GM12878 (cell line): ENCODE measurements at regions of chrX and their contacts with region 1.

Region 1: DNA sequence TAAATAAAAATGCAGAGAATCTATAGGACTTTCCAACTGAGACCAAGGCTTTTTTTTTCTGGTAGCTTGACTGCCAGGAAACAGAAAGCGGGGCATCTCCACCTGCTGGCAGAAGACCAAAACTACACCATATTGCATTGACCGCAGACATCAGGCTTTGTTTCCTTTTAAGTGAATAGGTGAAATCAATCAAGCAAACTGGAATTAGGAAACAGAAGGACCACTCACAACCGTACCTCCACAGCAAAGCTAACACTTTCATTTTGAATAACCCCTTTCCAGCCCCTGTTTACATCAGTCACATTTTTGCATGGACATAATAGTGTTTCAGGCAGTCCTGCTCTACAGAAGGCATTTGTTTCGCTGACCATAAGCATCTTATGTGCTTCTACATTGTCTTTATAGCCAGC is 218.2 kb downstream of the IDS start:
- DNase-seq: peak; percentile 40
- ATAC-seq: peak; percentile 76
- H3K4me3 ChIP-seq: no peak overlapping the region
- H3K27ac ChIP-seq: no peak overlapping the region
- H3K4me1 ChIP-seq: no peaks in the 10 kb centered on the region
- H3K27me3 ChIP-seq: no peaks in the 10 kb centered on the region
- CTCF ChIP-seq: peak; percentile 73 to 85 (median 73)
- EP300 ChIP-seq: no peak
- POLR2A ChIP-seq: no peak
- RAD21 ChIP-seq: peak; percentile 83

Region 2: DNA sequence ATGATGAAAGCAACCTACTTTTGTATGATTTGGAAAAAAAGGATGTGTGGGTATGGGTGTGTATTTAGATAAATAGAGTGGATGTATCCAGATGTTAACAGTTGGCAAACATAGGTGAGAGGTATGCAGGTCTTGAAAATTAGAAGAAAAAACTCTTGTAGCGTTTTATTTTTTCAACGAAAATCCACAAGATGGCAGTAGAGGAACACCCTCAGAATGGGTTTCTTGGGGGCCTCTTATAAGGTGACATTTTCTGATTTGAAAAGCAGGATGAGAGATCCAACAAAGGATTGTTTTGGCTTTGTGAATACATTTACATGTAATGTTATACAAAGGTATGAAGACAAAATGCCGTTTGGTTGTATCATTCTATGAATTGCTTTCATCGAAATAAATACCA is 1237.5 kb before region 1 on chrX:
- CTCF ChIA-PET with region 1: interaction called, 3 read pairs
- POLR2A ChIA-PET with region 1: no interaction called
- RAD21 ChIA-PET with region 1: interaction called, 8 read pairs
- SMC1A ChIA-PET with region 1: interaction called, 8 read pairs
- in situ Hi-C with region 1: loop called (anchors 5 kb)
- intact Hi-C with region 1: loop called (anchors 1 kb)
- DNase-seq: no peak
- ATAC-seq: peak; percentile 69
- H3K4me3 ChIP-seq: no peak overlapping the region
- H3K27ac ChIP-seq: no peak overlapping the region
- H3K4me1 ChIP-seq: no peaks in the 10 kb centered on the region
- H3K27me3 ChIP-seq: no peaks in the 10 kb centered on the region
- CTCF ChIP-seq: peak; percentile 46 to 62 (median 49); a peak in 5 of 6 replicates
- EP300 ChIP-seq: no peak
- POLR2A ChIP-seq: no peak
- RAD21 ChIP-seq: peak; percentile 90

Region 3: GRCh38 chrX:148530464-148531077 is 756.4 kb before region 1 on chrX:
- CTCF ChIA-PET with region 1: interaction called, 6 read pairs
- POLR2A ChIA-PET with region 1: no interaction called
- RAD21 ChIA-PET with region 1: interaction called, 3 read pairs
- SMC1A ChIA-PET with region 1: interaction called, 5 read pairs
- in situ Hi-C with region 1: no loop called
- intact Hi-C with region 1: loop called (anchors 10 kb)
- DNase-seq: no peak
- ATAC-seq: no peak; the same call in 2 of the 3 replicates
- H3K4me3 ChIP-seq: no peak overlapping the region
- H3K27ac ChIP-seq: no peak overlapping the region
- H3K4me1 ChIP-seq: no peaks in the 10 kb centered on the region
- H3K27me3 ChIP-seq: no peaks in the 10 kb centered on the region
- CTCF ChIP-seq: peak; percentile 47 to 74 (median 58); a peak in 5 of 6 replicates
- EP300 ChIP-seq: no peak
- POLR2A ChIP-seq: no peak
- RAD21 ChIP-seq: peak; percentile 43

Region 4: DNA sequence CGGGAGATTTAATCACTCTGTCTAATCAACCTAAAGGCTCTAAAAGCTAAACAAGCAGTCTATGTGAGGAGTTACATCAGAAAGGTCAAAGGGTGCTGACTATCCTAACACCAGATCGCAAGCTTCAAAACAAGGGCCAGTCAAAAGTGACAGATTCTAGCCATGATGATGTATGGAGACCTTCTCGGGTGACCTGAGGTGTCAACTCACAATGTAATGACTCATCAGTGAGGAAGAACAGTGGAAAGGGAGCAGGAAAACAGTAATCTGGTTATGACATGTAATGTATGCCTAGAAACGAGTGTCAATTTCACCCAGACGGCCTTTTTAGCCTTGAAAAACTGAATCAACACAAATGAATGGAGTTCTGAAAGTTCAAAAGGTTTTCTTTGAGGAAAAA is 157.2 kb before region 1 on chrX:
- CTCF ChIA-PET with region 1: interaction called, 3 read pairs
- POLR2A ChIA-PET with region 1: no interaction called
- RAD21 ChIA-PET with region 1: interaction called, 3 read pairs
- SMC1A ChIA-PET with region 1: no interaction called
- in situ Hi-C with region 1: no loop called
- intact Hi-C with region 1: loop called (anchors 10 kb)
- DNase-seq: no peak
- ATAC-seq: peak; percentile 66
- H3K4me3 ChIP-seq: no peak overlapping the region
- H3K27ac ChIP-seq: no peak overlapping the region
- H3K4me1 ChIP-seq: no peaks in the 10 kb centered on the region
- H3K27me3 ChIP-seq: no peaks in the 10 kb centered on the region
- CTCF ChIP-seq: no peak
- EP300 ChIP-seq: no peak
- POLR2A ChIP-seq: no peak
- RAD21 ChIP-seq: no peak

Region 5: DNA sequence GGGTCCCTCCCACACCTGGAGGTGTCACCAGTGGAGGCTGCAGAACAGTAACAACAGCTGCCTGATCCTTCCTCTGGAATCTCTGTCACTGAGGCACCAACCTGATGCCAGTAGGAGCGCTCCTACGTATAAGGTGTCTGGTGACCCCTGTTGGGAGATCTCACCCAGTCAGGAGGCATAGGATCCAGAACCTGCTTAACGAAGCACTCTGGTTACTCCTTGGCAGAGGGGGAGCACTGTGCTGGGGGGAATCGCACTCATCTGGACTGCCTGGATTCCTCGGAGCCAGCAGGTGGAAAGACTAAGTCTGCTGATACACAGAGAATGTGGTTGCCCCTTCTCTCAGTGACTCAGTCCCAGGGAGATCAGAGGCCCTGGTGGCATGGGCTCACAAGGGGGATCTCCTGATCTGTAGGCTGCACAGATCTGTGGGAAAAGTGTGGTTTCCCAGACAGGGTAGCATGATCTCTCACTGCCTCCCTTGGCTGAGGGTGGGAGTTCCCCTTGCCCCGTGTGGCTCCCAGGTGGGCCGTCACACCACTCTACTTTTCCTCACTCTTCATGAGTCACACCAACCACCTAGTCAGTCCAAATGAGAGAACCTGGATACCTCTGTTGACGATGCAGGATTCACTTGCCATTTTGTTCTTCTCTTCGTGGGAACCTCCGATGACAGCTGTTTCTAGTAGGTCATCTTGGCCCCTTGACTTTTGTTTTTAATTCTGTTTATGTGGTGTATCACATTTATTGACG is 87.8 kb before region 1 on chrX:
- CTCF ChIA-PET with region 1: interaction called, 13 read pairs
- POLR2A ChIA-PET with region 1: interaction called, 10 read pairs
- RAD21 ChIA-PET with region 1: interaction called, 47 read pairs
- SMC1A ChIA-PET with region 1: interaction called, 54 read pairs
- in situ Hi-C with region 1: no loop called
- intact Hi-C with region 1: loop called (anchors 2 kb)
- DNase-seq: peak; percentile 82
- ATAC-seq: peak; percentile 85
- H3K4me3 ChIP-seq: no peak overlapping the region
- H3K27ac ChIP-seq: peak overlapping the region; percentile 65
- H3K4me1 ChIP-seq: peaks cover 5% of the 10 kb centered on the region; the same call in 1 of the 2 replicates
- H3K27me3 ChIP-seq: no peaks in the 10 kb centered on the region
- CTCF ChIP-seq: no peak
- EP300 ChIP-seq: peak in 1 of 2 experiments; percentile 35; a peak in 1 of 4 replicates
- POLR2A ChIP-seq: no peak
- RAD21 ChIP-seq: no peak

Region 6: GRCh38 chrX:149267878-149268813 is 18.8 kb before region 1 on chrX:
- CTCF ChIA-PET with region 1: interaction called, 20 read pairs
- POLR2A ChIA-PET with region 1: interaction called, 4 read pairs
- RAD21 ChIA-PET with region 1: interaction called, 34 read pairs
- SMC1A ChIA-PET with region 1: interaction called, 50 read pairs
- in situ Hi-C with region 1: no loop called
- intact Hi-C with region 1: no loop called
- DNase-seq: peak; percentile 24
- ATAC-seq: peak; percentile 81
- H3K4me3 ChIP-seq: no peak overlapping the region
- H3K27ac ChIP-seq: no peak overlapping the region
- H3K4me1 ChIP-seq: no peaks in the 10 kb centered on the region
- H3K27me3 ChIP-seq: no peaks in the 10 kb centered on the region
- CTCF ChIP-seq: no peak
- EP300 ChIP-seq: no peak
- POLR2A ChIP-seq: no peak
- RAD21 ChIP-seq: no peak

Region 7: DNA sequence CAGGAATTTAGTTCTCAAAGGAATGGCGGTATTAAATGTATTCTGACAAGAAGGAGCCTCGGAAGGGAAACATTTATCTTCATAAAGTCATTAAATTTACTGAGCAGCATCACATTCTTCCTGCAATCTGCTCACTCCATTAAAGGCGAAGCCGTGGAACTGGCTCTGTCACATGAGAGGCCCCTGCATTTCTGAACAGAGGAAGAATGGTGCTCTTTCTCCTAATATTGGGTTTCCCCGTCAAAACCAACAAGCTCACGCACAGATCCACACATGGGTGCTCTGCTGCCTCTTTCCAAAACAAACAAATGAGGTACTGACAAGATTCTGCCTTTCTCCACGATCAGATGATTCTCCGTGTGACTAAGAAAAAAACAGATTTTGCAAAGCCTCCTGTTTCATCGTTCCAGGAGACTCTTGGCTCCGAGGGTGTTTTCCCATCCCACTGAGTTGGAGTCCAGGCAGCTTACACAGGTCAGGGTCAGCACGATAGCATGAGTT is 27.0 kb after region 1 on chrX:
- CTCF ChIA-PET with region 1: no interaction called
- POLR2A ChIA-PET with region 1: no interaction called
- RAD21 ChIA-PET with region 1: no interaction called
- SMC1A ChIA-PET with region 1: no interaction called
- in situ Hi-C with region 1: no loop called
- intact Hi-C with region 1: no loop called
- DNase-seq: no peak
- ATAC-seq: no peak
- H3K4me3 ChIP-seq: no peak overlapping the region
- H3K27ac ChIP-seq: no peak overlapping the region
- H3K4me1 ChIP-seq: no peaks in the 10 kb centered on the region
- H3K27me3 ChIP-seq: no peaks in the 10 kb centered on the region
- CTCF ChIP-seq: no peak
- EP300 ChIP-seq: no peak
- POLR2A ChIP-seq: no peak
- RAD21 ChIP-seq: no peak

Region 8: GRCh38 chrX:149456476-149457245 is 169.7 kb after region 1 on chrX:
- CTCF ChIA-PET with region 1: no interaction called
- POLR2A ChIA-PET with region 1: no interaction called
- RAD21 ChIA-PET with region 1: no interaction called
- SMC1A ChIA-PET with region 1: no interaction called
- in situ Hi-C with region 1: no loop called
- intact Hi-C with region 1: no loop called
- DNase-seq: no peak
- ATAC-seq: no peak
- H3K4me3 ChIP-seq: no peak overlapping the region
- H3K27ac ChIP-seq: no peak overlapping the region
- H3K4me1 ChIP-seq: no peaks in the 10 kb centered on the region
- H3K27me3 ChIP-seq: no peaks in the 10 kb centered on the region
- CTCF ChIP-seq: no peak
- EP300 ChIP-seq: no peak
- POLR2A ChIP-seq: no peak
- RAD21 ChIP-seq: no peak

Region 9: DNA sequence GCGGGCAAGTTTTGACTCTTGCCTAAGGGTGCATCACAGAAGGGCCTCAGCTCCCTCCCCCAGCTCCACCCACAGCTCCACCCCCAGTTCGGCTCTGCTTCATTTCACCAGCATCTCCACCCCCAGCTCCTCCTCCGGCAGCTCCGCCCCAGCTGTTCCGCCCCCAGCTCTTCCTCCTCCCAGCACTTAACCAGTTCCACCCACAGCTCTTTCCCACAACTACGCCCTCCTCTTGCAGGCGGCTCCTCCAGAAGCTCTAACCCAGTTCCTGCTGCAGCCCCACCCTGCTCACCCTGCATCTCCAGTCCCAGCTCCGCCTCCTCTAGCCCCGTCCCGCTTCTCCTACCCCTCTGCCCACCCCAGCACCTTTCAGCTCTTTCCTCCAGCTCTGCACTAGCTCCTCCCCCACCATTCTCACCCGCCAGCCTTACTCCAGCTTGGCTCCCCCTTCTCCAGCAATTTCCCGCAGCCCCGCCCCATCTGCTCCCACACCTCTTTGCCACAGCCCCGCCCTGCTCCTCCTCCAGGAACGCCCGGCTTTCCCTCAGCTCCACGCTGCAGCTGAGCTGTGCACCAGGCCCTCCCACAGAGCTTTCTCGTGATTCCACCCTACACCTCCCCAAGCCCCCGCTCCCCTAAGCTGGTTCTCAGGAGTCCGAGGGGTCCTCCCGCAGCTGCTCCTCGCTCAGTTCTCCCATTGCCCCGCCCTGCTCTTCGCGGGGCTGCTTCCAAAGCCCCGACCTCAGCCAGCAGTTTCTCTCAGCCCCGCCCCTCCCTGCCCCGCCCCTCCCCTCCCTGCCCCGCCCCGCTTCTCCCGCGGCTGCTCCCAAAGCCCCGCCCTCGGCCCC is 252.6 kb after region 1 on chrX:
- CTCF ChIA-PET with region 1: no interaction called
- POLR2A ChIA-PET with region 1: no interaction called
- RAD21 ChIA-PET with region 1: no interaction called
- SMC1A ChIA-PET with region 1: no interaction called
- in situ Hi-C with region 1: no loop called
- intact Hi-C with region 1: no loop called
- DNase-seq: peak; percentile 83
- ATAC-seq: peak; percentile 74
- H3K4me3 ChIP-seq: peak overlapping the region; percentile 44; the same call in 1 of the 2 replicates
- H3K27ac ChIP-seq: peak overlapping the region; percentile 18; the same call in 1 of the 2 replicates
- H3K4me1 ChIP-seq: peaks cover 4% of the 10 kb centered on the region; the same call in 1 of the 2 replicates
- H3K27me3 ChIP-seq: no peaks in the 10 kb centered on the region
- CTCF ChIP-seq: no peak
- EP300 ChIP-seq: no peak
- POLR2A ChIP-seq: no peak; the same call in 1 of the 2 replicates
- RAD21 ChIP-seq: no peak

Region 10: GRCh38 chrX:149939796-149940673 is 653.1 kb after region 1 on chrX:
- CTCF ChIA-PET with region 1: no interaction called
- POLR2A ChIA-PET with region 1: no interaction called
- RAD21 ChIA-PET with region 1: no interaction called
- SMC1A ChIA-PET with region 1: no interaction called
- in situ Hi-C with region 1: no loop called
- intact Hi-C with region 1: no loop called
- DNase-seq: peak; percentile 88
- ATAC-seq: peak; percentile 66
- H3K4me3 ChIP-seq: peak overlapping the region; percentile 47; the same call in 1 of the 2 replicates
- H3K27ac ChIP-seq: peak overlapping the region; percentile 73
- H3K4me1 ChIP-seq: no peaks in the 10 kb centered on the region
- H3K27me3 ChIP-seq: no peaks in the 10 kb centered on the region
- CTCF ChIP-seq: peak in 1 of 3 experiments; percentile 27; a peak in 1 of 6 replicates
- EP300 ChIP-seq: peak in 1 of 2 experiments; percentile 60; a peak in 2 of 4 replicates
- POLR2A ChIP-seq: peak; percentile 65
- RAD21 ChIP-seq: no peak